Aorta (tissue), 5 donors: ENCODE measurements at regions of chr10 and their contacts with region 1.

Region 1: DNA sequence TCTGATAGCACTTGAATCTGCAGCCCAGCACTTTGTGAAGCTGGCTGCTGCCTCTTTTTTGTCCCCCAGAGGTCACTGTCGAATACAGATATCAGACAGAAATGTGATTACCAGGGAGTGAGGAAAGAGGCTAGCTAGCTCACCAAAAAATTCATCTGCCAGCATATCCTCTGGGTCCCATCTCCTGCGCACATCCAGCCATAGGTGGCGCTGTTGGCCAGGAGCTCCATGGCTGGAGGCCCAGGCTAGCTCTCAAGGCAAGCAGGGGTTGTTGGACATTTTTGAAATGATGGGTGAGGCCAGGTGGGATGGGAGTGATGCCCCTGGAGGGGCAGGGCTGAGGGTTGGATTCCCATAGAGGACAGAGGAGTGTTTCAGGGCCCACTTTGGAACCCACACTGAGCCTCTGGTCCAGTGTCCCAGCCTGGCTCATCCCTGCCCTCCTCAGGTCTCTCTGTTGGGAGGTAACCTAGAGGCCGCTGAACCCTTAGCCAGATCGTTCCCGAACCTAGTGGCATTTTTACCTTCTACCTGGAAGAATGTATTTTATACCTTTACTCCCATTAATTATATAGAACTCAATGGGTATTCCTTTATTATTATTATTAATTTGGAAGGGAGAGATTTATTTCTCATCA is 14.8 kb downstream of the DPCD start:
- DNase-seq: peak; percentile 78 to 89
- ATAC-seq: peak; percentile 82
- H3K4me3 ChIP-seq: no peak overlapping the region
- H3K27ac ChIP-seq: no peak overlapping the region
- H3K4me1 ChIP-seq: no peaks in the 10 kb centered on the region
- H3K27me3 ChIP-seq: no peaks in the 10 kb centered on the region

Region 2: DNA sequence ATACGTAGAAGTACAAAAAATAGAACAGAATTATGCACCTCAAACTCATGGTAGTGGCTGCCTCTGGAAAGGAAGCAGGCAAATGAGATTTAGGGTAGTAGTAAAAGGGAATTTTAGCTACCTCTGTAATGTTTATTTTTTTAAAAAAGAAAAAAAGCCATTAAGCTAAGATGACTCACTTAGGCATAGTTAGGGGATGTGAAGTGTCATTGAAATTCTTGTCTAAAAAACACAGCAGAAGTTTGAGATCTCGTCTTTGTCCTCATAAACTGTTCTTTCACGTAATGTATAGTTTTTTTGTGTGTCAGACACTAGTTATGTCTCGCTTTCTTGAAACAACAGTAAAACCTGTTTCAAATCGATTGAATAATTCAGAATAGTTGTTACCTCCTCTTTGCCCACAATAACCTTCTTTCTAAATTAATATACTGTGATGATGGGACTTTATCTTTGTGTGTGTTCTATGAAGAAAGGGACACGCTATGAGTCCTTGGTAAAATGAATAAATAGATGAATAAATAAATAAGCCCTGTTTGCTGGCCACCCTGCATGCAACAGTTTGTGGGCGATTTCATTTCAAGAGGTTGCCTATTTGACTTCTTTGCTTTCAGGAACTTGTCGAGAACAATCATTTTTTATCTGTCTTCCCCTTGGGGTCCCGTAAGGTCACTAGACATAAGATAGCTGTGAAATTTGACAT is 106.6 kb after region 1 on chr10:
- intact Hi-C with region 1: loop called in 1 of 2 experiments (anchors 10 kb)
- DNase-seq: no peak
- ATAC-seq: no peak
- H3K4me3 ChIP-seq: no peak overlapping the region
- H3K27ac ChIP-seq: no peak overlapping the region
- H3K4me1 ChIP-seq: no peaks in the 10 kb centered on the region
- H3K27me3 ChIP-seq: no peaks in the 10 kb centered on the region

Region 3: DNA sequence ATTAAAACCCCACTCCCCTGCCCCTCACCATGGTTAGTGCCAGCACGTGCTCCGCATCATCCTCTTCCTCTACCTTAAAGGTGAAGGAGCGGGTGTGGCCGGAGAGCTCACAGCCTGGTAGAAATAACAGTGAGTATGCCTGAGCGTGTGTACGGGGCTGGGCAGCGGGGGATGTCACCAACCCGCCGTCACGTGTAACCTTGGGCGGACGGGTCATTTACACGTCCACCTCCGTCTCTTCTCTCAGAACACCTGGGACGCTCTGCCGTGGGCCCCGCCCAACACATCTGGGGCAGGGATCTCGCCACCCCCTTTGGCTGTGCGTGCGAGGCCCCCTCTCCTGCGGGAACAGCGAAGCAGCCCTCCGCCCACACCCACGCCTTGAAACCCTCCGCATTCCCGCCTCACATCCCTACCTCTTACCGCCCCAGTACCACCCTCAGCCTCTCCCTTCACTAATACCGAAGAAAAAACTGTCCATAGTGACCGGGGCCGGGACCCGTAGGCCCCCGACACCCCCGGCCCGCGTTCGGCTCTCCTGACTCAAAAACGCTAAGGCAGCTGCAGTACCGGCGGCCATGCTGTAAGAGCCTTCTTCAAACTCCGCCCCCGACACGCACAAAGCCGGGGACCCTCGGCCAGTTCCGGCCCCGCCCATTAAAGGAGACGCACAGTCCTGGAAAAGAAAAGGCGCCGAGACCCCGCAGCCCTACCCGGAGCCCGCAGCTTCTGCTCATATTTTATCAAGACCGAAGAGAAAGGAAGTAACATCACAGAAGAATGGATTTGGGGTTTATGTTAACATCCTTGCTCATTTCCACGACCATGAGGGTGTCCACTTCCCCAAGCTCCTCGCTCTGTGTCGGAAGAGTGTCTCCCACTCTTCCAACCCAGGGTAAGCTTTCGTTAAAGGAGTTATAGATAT is 180.2 kb after region 1 on chr10 and contains the start of gene NPM3:
- intact Hi-C with region 1: loop called (anchors 2 to 5 kb)
- DNase-seq: peak; percentile 89 to 94
- ATAC-seq: peak; percentile 75
- H3K4me3 ChIP-seq: peak within 1 kb of the TSS; percentile 43 to 49
- H3K27ac ChIP-seq: no peak within 1 kb of the TSS
- H3K4me1 ChIP-seq: no peaks in the 10 kb centered on the region
- H3K27me3 ChIP-seq: no peaks in the 10 kb centered on the region
- total RNA-seq, gene NPM3: 12.7 to 19.8 TPM